ENCODE measurements at regions of chr4 and their contacts with region 1.

Region 1: GRCh38 chr4:142353149-142353738 is 492.9 kb downstream of the INPP4B start:
- DNase-seq: peak; percentile 68
- H3K4me3 Mint-ChIP-seq: no peak overlapping the region
- H3K27ac Mint-ChIP-seq: peak overlapping the region; percentile 85
- H3K4me1 Mint-ChIP-seq: peaks cover 37% of the 10 kb centered on the region
- H3K27me3 Mint-ChIP-seq: no peaks in the 10 kb centered on the region
- CTCF ChIP-seq: peak; percentile 83

Region 2: GRCh38 chr4:142363686-142364085 is 10.4 kb after region 1 on chr4:
- CTCF ChIA-PET with region 1: interaction called, 16 read pairs
- POLR2A ChIA-PET with region 1: interaction called, 4 read pairs
- intact Hi-C with region 1: no loop called
- DNase-seq: no peak
- H3K4me3 Mint-ChIP-seq: no peak overlapping the region
- H3K27ac Mint-ChIP-seq: no peak overlapping the region
- H3K4me1 Mint-ChIP-seq: peaks cover 36% of the 10 kb centered on the region
- H3K27me3 Mint-ChIP-seq: no peaks in the 10 kb centered on the region
- CTCF ChIP-seq: no peak

Region 3: DNA sequence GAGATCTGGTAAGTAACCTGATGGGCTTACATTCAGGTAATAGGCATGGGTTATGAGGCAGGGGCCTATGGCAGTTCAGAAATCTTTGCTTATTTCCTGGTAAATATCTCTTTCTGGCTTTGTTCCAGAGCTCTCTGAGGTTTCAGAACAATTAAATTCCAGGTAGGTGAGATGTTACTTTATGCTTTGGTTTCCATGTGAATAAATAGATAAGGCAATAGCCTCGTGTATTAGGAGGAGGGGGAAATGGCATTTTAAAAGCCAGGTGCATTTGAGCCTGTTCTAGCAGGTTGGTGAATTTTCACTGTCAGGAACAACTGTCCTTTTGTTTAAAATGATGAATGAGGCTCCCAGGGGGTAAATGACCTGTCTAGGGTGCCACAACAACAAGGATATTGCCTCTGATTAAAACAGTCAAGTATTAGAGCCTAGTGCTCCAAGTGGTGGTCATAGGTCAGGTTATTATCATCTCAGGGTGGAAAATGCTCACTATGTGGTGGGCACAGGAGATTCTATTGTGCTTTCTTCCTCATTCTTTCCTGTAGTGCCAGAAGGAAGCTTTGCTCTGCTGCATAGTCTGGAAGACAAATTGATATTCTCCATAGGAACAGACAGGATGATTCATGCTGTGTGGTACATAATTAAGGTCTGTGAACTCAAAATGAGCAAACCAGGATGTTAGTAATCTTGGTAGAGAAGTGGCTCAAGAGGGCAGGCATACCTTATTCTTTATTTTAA is 196.7 kb after region 1 on chr4:
- CTCF ChIA-PET with region 1: interaction called, 3 read pairs
- POLR2A ChIA-PET with region 1: no interaction called
- intact Hi-C with region 1: loop called (anchors 10 kb)
- DNase-seq: peak; percentile 58
- H3K4me3 Mint-ChIP-seq: no peak overlapping the region
- H3K27ac Mint-ChIP-seq: peak overlapping the region; percentile 77
- H3K4me1 Mint-ChIP-seq: peaks cover 30% of the 10 kb centered on the region
- H3K27me3 Mint-ChIP-seq: no peaks in the 10 kb centered on the region
- CTCF ChIP-seq: no peak

Region 4: DNA sequence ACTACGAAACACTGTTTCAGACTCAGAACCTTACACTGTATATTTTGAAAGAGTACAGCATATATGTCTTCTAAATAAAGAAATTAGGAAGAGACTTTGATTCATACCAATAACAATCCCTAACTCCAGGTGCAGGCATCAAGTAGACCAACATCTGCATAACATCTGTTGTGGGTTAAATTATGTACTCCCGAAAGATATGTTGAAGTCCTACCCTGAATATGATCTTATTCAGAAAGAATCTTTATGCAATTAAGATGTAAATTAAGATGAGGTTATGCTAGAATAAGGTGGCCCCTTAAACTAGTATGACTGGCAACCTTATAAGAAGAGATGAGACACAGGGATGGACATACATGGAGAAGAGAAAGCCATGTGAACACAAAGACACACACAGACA is 375.0 kb after region 1 on chr4:
- CTCF ChIA-PET with region 1: interaction called, 12 read pairs
- POLR2A ChIA-PET with region 1: no interaction called
- intact Hi-C with region 1: no loop called
- DNase-seq: no peak
- H3K4me3 Mint-ChIP-seq: no peak overlapping the region
- H3K27ac Mint-ChIP-seq: no peak overlapping the region
- H3K4me1 Mint-ChIP-seq: no peaks in the 10 kb centered on the region
- H3K27me3 Mint-ChIP-seq: no peaks in the 10 kb centered on the region
- CTCF ChIP-seq: no peak

Region 5: DNA sequence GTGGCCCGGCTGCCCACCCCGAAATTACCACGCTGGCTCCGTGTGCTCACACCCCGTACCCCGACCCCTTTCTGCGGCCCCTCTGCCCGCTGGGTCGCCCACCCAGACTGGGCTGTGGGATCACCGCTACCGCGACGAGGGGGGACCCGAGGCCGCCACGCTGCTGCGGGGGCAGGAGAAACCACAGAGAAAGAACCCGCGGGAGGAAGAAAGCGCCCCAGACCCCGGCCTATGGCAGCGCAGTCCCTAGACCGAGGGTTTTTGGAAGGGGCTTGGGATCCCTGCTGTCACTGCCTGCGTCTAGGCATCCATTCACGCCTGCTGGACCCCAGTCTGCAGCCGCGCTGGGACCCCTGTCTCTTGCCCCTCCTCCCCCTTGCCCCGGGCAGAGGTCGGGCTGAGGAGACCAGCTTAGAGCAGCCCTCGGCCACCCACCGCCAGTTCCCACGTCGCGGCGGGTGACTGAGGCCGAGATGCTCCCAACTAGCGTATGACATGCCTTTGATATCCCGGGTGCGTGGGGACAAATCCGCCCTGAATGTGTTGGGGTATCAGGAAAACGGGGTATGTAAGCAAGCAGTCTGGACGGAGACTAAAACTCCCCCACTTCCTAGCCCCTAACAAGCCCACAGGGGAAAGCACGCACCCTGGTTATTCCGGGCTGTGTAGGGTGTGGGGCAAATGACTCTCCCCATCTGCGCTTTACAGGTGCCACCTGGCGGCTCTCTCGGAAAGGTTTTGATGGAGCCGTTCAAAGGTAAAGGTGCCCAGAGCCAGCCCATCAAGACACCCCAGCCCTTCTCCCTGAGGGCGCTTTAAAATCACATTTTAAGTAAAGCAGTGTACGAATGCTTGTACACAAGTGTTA is 493.7 kb after region 1 on chr4:
- CTCF ChIA-PET with region 1: interaction called, 23 read pairs
- POLR2A ChIA-PET with region 1: no interaction called
- intact Hi-C with region 1: no loop called
- DNase-seq: peak; percentile 79
- H3K4me3 Mint-ChIP-seq: peak overlapping the region; percentile 82
- H3K27ac Mint-ChIP-seq: no peak overlapping the region
- H3K4me1 Mint-ChIP-seq: peaks cover 6% of the 10 kb centered on the region
- H3K27me3 Mint-ChIP-seq: no peaks in the 10 kb centered on the region
- CTCF ChIP-seq: peak; percentile 79

Measured in MCF 10A (cell line).